ENCODE measurements at regions of chr2 and their contacts with region 1.

Region 1: GRCh38 chr2:54531558-54531957 is 75.4 kb downstream of the SPTBN1 start:
- DNase-seq: peak; percentile 97
- H3K4me3 ChIP-seq: no peak overlapping the region
- H3K27ac ChIP-seq: peak overlapping the region; percentile 100
- H3K4me1 ChIP-seq: peaks cover 35% of the 10 kb centered on the region
- H3K27me3 ChIP-seq: no peaks in the 10 kb centered on the region
- CTCF ChIP-seq: no peak

Region 2: GRCh38 chr2:54570925-54571694 is 39.6 kb after region 1 on chr2:
- CTCF ChIA-PET with region 1: no interaction called
- dilution Hi-C with region 1: no loop called
- in situ Hi-C with region 1: loop called in 1 of 2 experiments (anchors 5 kb)
- intact Hi-C with region 1: loop called (anchors 2 kb)
- DNase-seq: peak; percentile 70
- H3K4me3 ChIP-seq: no peak overlapping the region
- H3K27ac ChIP-seq: peak overlapping the region; percentile 96
- H3K4me1 ChIP-seq: peaks cover 68% of the 10 kb centered on the region
- H3K27me3 ChIP-seq: no peaks in the 10 kb centered on the region
- CTCF ChIP-seq: no peak

Region 3: DNA sequence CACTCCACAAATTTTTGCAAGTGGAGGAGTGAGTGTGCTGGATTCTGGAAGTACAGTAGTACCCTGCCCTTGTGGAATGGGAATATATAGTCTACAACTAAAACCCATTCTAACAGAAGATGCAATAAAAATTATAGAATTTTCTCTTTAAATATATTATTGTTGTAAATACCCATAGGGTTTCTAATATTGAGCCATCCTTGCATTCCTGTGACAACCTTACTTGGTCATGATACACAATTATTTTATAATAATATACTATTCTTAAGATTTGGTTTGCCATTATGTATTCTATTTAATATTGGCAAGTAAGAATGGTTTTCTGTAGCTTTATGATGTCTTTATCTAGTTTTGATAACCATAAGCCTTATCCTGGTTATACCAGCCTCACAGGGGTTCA is 244.2 kb after region 1 on chr2:
- CTCF ChIA-PET with region 1: no interaction called
- dilution Hi-C with region 1: no loop called
- in situ Hi-C with region 1: no loop called
- intact Hi-C with region 1: no loop called
- DNase-seq: no peak
- H3K4me3 ChIP-seq: no peak overlapping the region
- H3K27ac ChIP-seq: no peak overlapping the region
- H3K4me1 ChIP-seq: peaks cover 26% of the 10 kb centered on the region
- H3K27me3 ChIP-seq: no peaks in the 10 kb centered on the region
- CTCF ChIP-seq: no peak